B cell (primary cell): ENCODE measurements at regions of chr5 and their contacts with region 1.

Region 1: GRCh38 chr5:134769206-134769605 is 10.6 kb downstream of the DDX46 start:
- DNase-seq: no peak
- ATAC-seq: no peak
- H3K4me3 ChIP-seq: no peak overlapping the region
- H3K4me3 Mint-ChIP-seq: no peak overlapping the region
- H3K27ac ChIP-seq: no peak overlapping the region
- H3K27ac Mint-ChIP-seq: no peak overlapping the region
- H3K4me1 ChIP-seq: no peaks in the 10 kb centered on the region
- H3K4me1 Mint-ChIP-seq: no peaks in the 10 kb centered on the region
- H3K27me3 ChIP-seq: no peaks in the 10 kb centered on the region
- H3K27me3 Mint-ChIP-seq: no peaks in the 10 kb centered on the region
- CTCF ChIP-seq: no peak

Region 2: GRCh38 chr5:134813407-134813806 is 44.2 kb after region 1 on chr5:
- CTCF ChIA-PET with region 1: no interaction called
- POLR2A ChIA-PET with region 1: no interaction called
- intact Hi-C with region 1: no loop called
- DNase-seq: peak; percentile 37
- ATAC-seq: peak; percentile 67
- H3K4me3 ChIP-seq: peak overlapping the region in 1 of 5 experiments; percentile 1
- H3K4me3 Mint-ChIP-seq: peak overlapping the region; percentile 54
- H3K27ac ChIP-seq: peak overlapping the region; percentile 32 to 74
- H3K27ac Mint-ChIP-seq: peak overlapping the region; percentile 53
- H3K4me1 ChIP-seq: peaks cover 10 to 16% of the 10 kb centered on the region in 2 donors
- H3K4me1 Mint-ChIP-seq: peaks cover 14% of the 10 kb centered on the region
- H3K27me3 ChIP-seq: no peaks in the 10 kb centered on the region
- H3K27me3 Mint-ChIP-seq: no peaks in the 10 kb centered on the region
- CTCF ChIP-seq: no peak

Region 3: DNA sequence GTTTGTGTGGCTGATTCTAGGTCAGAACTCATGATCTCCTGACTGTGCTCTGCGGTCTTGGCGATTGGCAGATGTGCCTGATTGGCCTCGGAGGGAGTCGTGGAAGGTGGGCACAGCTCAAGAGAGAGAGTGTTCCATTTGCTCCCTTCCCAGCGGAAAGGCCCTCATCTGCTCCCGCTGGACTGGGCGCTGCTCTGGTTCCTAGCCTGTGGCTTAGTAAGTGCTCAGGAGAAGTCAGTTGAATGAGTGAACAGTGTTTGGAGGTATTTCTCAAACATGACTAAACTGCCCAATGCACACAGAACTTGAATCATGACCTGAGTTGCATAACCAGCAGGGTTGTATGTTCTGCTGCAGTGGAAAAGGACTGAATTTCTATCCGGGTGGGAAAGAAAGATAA is 385.0 kb after region 1 on chr5:
- CTCF ChIA-PET with region 1: no interaction called
- POLR2A ChIA-PET with region 1: no interaction called
- intact Hi-C with region 1: no loop called
- DNase-seq: no peak
- ATAC-seq: no peak
- H3K4me3 ChIP-seq: no peak overlapping the region
- H3K4me3 Mint-ChIP-seq: no peak overlapping the region
- H3K27ac ChIP-seq: no peak overlapping the region
- H3K27ac Mint-ChIP-seq: no peak overlapping the region
- H3K4me1 ChIP-seq: no peaks in the 10 kb centered on the region
- H3K4me1 Mint-ChIP-seq: no peaks in the 10 kb centered on the region
- H3K27me3 ChIP-seq: peaks cover 0 to 8% (median 0%) of the 10 kb centered on the region in 4 experiments
- H3K27me3 Mint-ChIP-seq: peaks cover 21% of the 10 kb centered on the region
- CTCF ChIP-seq: no peak

Region 4: DNA sequence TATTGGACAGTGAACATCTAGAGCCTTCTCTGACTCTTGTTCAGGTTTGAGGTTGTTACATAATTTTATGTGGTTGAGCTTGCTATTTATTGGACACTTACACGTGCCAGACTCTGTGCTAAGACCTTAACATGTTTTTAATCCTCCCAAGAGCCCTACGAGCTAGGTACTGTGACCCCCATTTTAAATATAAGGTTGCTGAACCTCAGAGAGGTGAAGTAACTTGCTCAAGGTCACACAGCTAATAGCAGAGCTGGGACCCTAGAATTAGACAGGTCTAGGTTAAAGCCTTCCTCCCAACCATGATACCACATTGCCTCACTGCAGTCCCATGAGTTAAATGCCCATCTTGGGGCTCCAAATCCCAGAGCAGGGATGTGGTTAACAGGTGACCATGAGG is 400.5 kb after region 1 on chr5:
- CTCF ChIA-PET with region 1: no interaction called
- POLR2A ChIA-PET with region 1: interaction called, 11 read pairs
- intact Hi-C with region 1: no loop called
- DNase-seq: no peak
- ATAC-seq: no peak
- H3K4me3 ChIP-seq: no peak overlapping the region
- H3K4me3 Mint-ChIP-seq: no peak overlapping the region
- H3K27ac ChIP-seq: no peak overlapping the region
- H3K27ac Mint-ChIP-seq: no peak overlapping the region
- H3K4me1 ChIP-seq: no peaks in the 10 kb centered on the region
- H3K4me1 Mint-ChIP-seq: no peaks in the 10 kb centered on the region
- H3K27me3 ChIP-seq: peaks cover 0 to 27% (median 5%) of the 10 kb centered on the region in 4 experiments
- H3K27me3 Mint-ChIP-seq: peaks cover 59% of the 10 kb centered on the region
- CTCF ChIP-seq: no peak

Region 5: DNA sequence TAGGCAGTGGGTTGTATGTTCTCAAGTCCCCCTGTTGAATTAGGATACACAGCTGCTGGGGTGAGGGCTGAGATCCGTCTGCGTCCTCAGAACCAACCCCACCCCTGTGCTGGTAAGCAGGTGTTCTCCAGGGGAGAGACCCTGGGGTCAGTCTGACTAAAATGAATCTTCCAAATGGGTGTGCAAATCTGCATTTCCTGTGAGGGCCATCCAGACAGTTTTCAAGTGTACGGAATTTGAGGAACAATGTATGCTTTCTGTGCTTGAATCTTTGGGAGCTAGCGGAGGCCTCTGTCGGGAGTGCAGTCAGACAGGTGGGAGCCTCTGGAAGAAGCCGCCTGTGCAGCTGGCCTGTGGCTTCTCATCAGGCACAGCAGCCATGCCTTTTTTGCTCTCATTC is 506.9 kb after region 1 on chr5:
- CTCF ChIA-PET with region 1: no interaction called
- POLR2A ChIA-PET with region 1: no interaction called
- intact Hi-C with region 1: no loop called
- DNase-seq: no peak
- ATAC-seq: no peak
- H3K4me3 ChIP-seq: no peak overlapping the region
- H3K4me3 Mint-ChIP-seq: no peak overlapping the region
- H3K27ac ChIP-seq: no peak overlapping the region
- H3K27ac Mint-ChIP-seq: no peak overlapping the region
- H3K4me1 ChIP-seq: no peaks in the 10 kb centered on the region
- H3K4me1 Mint-ChIP-seq: no peaks in the 10 kb centered on the region
- H3K27me3 ChIP-seq: no peaks in the 10 kb centered on the region
- H3K27me3 Mint-ChIP-seq: no peaks in the 10 kb centered on the region
- CTCF ChIP-seq: no peak